ENCODE measurements at regions of chr20 and their contacts with region 1.

Region 1: DNA sequence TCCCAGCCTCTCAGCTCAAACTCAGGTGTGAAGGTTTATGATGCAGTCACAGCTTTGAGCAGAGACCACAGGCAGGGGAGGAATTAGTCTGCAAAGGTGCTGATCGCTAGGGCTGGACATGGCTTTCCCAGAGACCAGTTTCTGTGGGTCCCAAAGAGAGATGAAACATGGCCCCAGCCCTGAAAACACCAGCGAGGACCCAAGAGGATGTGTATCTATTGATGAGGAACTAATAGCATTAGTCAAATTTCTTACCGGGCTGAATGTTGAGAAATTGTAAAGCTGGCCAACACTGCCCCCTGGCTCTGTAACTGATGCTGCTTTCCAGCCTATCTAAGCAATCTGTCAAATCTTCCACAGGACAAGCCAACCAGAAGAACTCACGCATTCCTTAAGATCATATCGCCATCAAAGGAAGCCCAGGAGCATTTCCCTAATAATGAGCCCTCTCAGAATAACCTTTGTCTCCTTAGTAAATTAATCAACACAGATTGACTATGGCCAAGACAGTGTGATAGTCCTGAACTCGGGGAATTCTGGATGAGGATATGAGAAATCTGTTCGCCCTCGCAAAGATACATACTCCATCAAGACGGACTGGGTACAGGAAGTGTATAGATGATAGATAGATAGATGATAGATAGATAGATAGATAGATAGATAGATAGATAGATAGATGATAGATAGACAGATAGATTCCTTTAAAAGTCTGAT is 7.8 kb upstream of the ACSS1 start:
- DNase-seq: peak; percentile 84

Region 2: DNA sequence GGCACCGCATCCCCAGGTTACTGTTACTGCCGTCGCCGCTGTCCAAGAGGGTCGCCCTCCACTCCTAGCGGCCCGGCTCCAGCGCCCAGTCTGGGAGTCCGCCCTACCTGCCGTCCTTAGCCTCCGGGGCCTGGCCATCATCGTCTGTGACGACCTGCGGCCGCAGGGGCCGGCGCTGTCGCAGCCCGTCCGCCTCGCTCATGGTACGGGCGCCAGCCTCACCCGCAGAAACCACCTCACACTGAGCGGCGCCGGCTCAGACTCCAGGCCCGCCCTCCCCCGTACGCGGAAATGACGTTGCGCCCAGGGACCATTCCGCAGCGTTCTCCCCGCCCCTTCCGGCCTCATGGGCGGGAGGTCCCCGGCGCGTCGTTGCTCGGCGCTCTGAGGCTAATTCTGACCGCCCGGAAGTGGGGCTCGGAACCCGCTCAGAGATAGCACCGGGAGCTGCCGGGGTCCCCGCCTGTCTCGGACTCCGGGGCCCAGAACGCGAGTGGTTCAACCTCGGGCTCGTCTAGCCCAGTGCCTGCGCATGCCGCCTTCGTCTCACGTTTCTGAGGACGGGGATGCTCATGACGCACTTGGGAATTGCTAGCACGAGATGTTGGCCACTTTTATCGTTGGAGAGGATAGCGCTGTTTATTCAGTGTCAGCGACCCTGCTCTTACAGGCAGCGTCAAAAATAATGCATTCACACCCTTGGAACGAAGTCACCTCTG is 73.1 kb before region 1 on chr20 and contains the start of gene APMAP:
- intact Hi-C with region 1: loop called (anchors 2 kb)
- DNase-seq: peak; percentile 99
- total RNA-seq, gene APMAP: 32.7 to 45.6 TPM